Activated B cell treated with CpG ODN at 0.5 μM for 24 hours (primary cell): ENCODE measurements at regions of chr22 and their contacts with region 1.

Region 1: GRCh38 chr22:50293441-50294318 is 13.8 kb downstream of the PLXNB2 start:
- DNase-seq: no peak
- ATAC-seq: peak; percentile 51
- H3K4me3 Mint-ChIP-seq: peak overlapping the region; percentile 56
- H3K27ac Mint-ChIP-seq: no peak overlapping the region
- H3K4me1 Mint-ChIP-seq: peaks cover 47% of the 10 kb centered on the region
- H3K27me3 Mint-ChIP-seq: peaks cover 6% of the 10 kb centered on the region
- CTCF ChIP-seq: no peak

Region 2: DNA sequence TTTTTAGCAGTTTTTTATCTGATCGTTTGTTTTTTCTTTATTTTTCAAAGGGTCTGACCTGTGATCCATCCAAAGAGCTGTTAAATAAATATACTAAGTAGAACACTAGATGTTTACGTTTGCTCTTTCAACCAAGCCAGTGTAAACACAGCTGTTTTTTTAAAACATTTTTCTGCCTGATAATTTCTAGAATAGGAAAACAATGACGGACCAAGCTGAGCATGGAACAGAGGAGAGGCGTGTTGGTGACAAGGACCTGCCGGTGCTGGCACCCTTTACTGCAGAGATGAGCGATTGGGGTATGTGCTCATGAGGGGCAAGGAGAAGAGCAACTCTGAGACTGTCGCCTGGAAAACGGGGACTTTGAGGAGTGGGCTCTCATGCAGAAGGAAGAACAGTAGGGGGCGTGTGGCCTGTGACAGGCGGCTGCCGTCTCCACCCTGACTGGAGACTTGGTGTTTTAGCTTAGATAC is 151.8 kb before region 1 on chr22:
- CTCF ChIA-PET with region 1: no interaction called
- POLR2A ChIA-PET with region 1: no interaction called
- intact Hi-C with region 1: no loop called
- DNase-seq: no peak
- ATAC-seq: no peak
- H3K4me3 Mint-ChIP-seq: no peak overlapping the region
- H3K27ac Mint-ChIP-seq: no peak overlapping the region
- H3K4me1 Mint-ChIP-seq: no peaks in the 10 kb centered on the region
- H3K27me3 Mint-ChIP-seq: peaks cover 11% of the 10 kb centered on the region
- CTCF ChIP-seq: no peak

Region 3: DNA sequence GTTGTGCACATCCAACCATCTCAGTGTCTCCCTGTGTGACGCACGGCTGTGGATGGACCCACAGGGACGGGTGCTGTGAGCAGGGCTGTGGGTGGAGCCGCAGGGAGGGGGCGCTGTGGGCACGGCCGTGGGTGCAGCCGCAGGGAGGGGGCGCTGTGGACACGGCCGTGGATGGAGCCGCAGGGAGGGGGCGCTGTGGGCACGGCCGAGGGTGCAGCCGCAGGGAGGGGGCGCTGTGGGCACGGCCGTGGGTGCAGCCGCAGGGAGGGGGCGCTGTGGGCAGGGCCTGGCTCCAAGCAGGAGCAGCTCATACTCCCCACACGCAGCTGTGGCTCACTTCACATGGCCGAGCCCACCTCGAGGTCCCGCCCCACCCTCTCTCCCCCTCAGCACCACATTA is 17.5 kb before region 1 on chr22:
- CTCF ChIA-PET with region 1: interaction called, 7 read pairs
- POLR2A ChIA-PET with region 1: interaction called, 7 read pairs
- intact Hi-C with region 1: loop called (anchors 2 kb)
- DNase-seq: no peak
- ATAC-seq: peak; percentile 78
- H3K4me3 Mint-ChIP-seq: no peak overlapping the region
- H3K27ac Mint-ChIP-seq: no peak overlapping the region
- H3K4me1 Mint-ChIP-seq: peaks cover 10% of the 10 kb centered on the region
- H3K27me3 Mint-ChIP-seq: no peaks in the 10 kb centered on the region
- CTCF ChIP-seq: no peak

Region 4: DNA sequence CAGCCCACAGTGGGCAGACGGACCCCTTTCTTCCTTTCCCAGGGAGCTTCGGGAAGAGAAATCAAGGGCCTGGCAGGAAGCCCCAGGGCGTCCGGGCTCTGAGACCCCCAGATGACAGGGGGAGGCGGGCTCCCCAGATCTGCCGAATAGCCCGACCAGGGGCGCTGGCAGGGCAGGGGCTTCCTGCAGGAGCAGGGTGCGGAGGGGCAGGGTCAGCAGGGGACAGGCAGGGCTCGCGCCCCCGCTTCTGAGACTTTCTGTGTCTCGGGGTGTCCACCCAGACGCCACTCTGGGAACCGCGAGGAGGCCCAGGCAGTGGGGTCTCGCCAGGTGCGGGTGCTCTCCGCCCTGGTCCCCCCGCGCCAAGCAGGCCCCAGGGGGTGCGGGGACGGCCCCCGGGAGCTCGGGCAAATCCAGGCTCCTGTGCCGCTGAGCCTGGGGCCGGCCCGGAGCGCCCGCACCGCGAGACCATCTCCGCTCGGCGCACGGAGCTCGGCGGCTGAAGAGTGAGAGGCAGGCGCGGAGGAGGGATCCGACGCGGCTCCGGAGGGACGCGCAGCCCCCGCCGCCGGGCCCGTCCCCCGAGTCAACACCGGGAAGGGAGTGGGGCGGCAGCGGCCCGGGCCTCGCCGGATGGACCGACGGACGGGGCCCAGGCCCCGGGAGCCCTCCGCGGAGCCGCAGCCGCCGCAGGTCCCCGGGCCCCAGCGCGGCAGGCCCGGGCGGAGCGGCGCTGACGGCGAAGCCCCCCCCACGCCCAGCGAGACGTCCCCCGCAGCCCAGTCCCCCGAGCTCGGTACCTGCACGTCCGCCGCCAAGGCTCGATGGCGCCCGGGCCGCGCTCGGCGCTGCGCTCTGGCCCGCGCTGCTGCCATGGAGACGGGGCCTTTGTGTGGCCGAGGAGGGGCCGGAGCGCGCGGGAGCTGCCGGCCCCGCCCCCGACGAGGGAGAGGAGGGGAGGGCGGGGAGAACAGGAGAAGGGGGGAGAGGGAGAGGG is 13.4 kb after region 1 on chr22 and contains the start of gene PLXNB2:
- CTCF ChIA-PET with region 1: interaction called, 4 read pairs
- POLR2A ChIA-PET with region 1: interaction called, 74 read pairs
- intact Hi-C with region 1: loop called (anchors 1 kb)
- DNase-seq: no peak
- ATAC-seq: peak; percentile 45
- H3K4me3 Mint-ChIP-seq: peak within 1 kb of the TSS; percentile 38
- H3K27ac Mint-ChIP-seq: no peak within 1 kb of the TSS
- H3K4me1 Mint-ChIP-seq: peaks cover 52% of the 10 kb centered on the region
- H3K27me3 Mint-ChIP-seq: no peaks in the 10 kb centered on the region
- CTCF ChIP-seq: no peak
- total RNA-seq, gene PLXNB2: 18.6 and 20.6 TPM in 2 replicates

Region 5: DNA sequence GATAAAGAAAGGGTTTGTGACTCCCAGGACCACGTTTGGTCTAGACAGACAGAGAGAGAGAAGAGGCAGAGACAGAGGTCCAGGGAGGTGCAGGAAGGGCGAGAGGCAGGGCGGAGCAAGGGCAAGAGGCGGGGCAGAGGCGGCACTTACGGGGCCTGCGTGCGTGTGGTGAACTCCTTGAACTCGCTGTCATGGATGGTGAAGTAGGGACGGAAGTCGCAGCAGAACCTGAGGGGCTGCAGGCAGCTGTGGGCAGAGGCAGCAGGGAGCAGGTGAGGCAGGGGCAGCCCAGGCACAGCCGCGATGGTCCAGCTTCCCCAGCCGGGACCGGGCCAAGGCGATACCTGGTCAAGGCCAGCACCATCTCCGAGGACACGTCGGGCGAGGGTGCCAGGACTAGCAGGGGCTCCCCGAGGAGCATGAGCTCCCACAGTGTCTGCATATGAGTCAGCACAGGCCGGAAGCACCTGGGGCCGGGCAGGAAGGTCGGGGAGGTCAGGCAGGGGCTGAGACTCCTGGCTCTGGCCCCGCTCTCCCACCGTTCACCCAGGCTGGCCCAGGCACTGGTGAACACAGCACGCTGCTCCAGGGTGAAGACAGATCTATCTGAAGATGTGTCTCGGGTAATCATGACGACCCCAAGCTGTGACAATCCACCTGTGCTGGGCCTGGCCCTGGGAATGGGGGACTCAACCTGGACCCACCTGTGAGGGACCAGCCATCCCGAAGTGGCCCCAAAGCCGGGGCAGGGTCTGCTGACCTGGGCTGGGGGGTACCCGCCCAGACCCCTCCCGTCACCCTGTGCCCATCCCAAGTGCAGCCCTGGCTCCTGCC is 21.0 kb after region 1 on chr22:
- CTCF ChIA-PET with region 1: interaction called, 5 read pairs
- POLR2A ChIA-PET with region 1: interaction called, 58 read pairs
- intact Hi-C with region 1: loop called (anchors 1 kb)
- DNase-seq: peak; percentile 76
- ATAC-seq: peak; percentile 90
- H3K4me3 Mint-ChIP-seq: peak overlapping the region; percentile 77
- H3K27ac Mint-ChIP-seq: peak overlapping the region; percentile 86
- H3K4me1 Mint-ChIP-seq: peaks cover 52% of the 10 kb centered on the region
- H3K27me3 Mint-ChIP-seq: no peaks in the 10 kb centered on the region
- CTCF ChIP-seq: no peak

Region 6: GRCh38 chr22:50399751-50400331 is 106.2 kb after region 1 on chr22:
- CTCF ChIA-PET with region 1: no interaction called
- POLR2A ChIA-PET with region 1: no interaction called
- intact Hi-C with region 1: no loop called
- DNase-seq: no peak
- ATAC-seq: peak; percentile 69
- H3K4me3 Mint-ChIP-seq: peak overlapping the region; percentile 35
- H3K27ac Mint-ChIP-seq: peak overlapping the region; percentile 64
- H3K4me1 Mint-ChIP-seq: peaks cover 49% of the 10 kb centered on the region
- H3K27me3 Mint-ChIP-seq: no peaks in the 10 kb centered on the region
- CTCF ChIP-seq: no peak